Activated CD4-positive, alpha-beta T cell treated with anti-CD3 and anti-CD28 coated beads, Interleukin-2, amount 10 ng/mL, durations not matched to agents 7 days and 5 days (primary cell): ENCODE measurements at regions of chr15 and their contacts with region 1.

Region 1: GRCh38 chr15:99704444-99704838 is 28.8 kb downstream of the LYSMD4 start:
- DNase-seq: peak; percentile 73
- H3K4me3 Mint-ChIP-seq: no peak overlapping the region
- H3K27ac Mint-ChIP-seq: no peak overlapping the region
- H3K4me1 Mint-ChIP-seq: peaks cover 50% of the 10 kb centered on the region
- H3K27me3 Mint-ChIP-seq: no peaks in the 10 kb centered on the region

Region 2: DNA sequence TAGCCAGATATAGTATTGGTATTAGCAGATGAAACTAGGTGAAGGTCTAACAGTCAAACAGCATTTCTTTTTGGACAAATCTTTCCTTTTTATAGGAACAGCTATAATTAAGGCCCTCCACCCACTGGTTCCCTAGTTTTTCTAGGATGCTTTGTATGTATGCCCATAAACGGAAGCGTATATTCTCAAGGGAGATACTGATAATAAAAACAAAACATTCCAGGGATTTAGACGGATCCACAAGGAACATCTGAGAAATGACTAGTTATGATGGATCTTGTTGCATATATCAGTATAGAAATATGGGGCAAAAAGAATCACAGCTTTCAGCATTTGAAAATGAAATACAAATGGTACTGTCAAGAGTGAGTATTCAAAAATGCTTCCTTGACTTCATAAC is 430.6 kb before region 1 on chr15:
- CTCF ChIA-PET with region 1: interaction called, 17 read pairs
- POLR2A ChIA-PET with region 1: no interaction called
- DNase-seq: no peak
- H3K4me3 Mint-ChIP-seq: no peak overlapping the region
- H3K27ac Mint-ChIP-seq: no peak overlapping the region
- H3K4me1 Mint-ChIP-seq: peaks cover 10% of the 10 kb centered on the region
- H3K27me3 Mint-ChIP-seq: no peaks in the 10 kb centered on the region

Region 3: GRCh38 chr15:99409097-99409473 is 295.4 kb before region 1 on chr15:
- CTCF ChIA-PET with region 1: interaction called, 10 read pairs
- POLR2A ChIA-PET with region 1: no interaction called
- DNase-seq: peak; percentile 28
- H3K4me3 Mint-ChIP-seq: no peak overlapping the region
- H3K27ac Mint-ChIP-seq: no peak overlapping the region
- H3K4me1 Mint-ChIP-seq: peaks cover 18% of the 10 kb centered on the region
- H3K27me3 Mint-ChIP-seq: no peaks in the 10 kb centered on the region

Region 4: DNA sequence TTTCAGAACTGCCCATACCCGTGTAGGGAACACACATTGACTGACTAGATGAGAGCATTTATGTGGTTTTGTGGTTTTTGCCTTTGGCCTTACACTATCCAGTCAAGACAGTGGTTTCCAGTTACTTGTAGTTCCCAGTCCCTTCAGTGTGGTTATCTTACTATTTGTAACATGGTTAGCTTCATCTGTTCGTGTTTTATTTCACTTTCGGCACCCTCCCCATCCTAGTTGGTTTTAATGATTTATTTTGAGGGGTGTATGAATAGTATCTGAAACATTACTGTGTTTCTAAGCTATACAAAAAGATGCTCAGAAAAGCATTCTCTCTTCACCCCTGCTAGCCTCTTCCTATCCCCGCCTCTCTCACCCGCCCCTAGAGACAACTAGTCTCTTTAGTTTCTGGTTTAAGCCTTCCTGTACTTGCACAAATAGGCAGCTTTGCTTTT is 14.7 kb after region 1 on chr15:
- CTCF ChIA-PET with region 1: interaction called, 12 read pairs
- POLR2A ChIA-PET with region 1: interaction called, 3 read pairs
- DNase-seq: no peak
- H3K4me3 Mint-ChIP-seq: no peak overlapping the region
- H3K27ac Mint-ChIP-seq: no peak overlapping the region
- H3K4me1 Mint-ChIP-seq: peaks cover 33% of the 10 kb centered on the region
- H3K27me3 Mint-ChIP-seq: no peaks in the 10 kb centered on the region